Transverse colon (tissue), 4 donors: ENCODE measurements at regions of chr10 and their contacts with region 1.

Region 1: GRCh38 chr10:43671656-43672531 is 23.2 kb upstream of the ZNF32 start:
- DNase-seq: peak; percentile 30
- H3K4me3 ChIP-seq: no peak overlapping the region
- H3K27ac ChIP-seq: no peak overlapping the region
- H3K4me1 ChIP-seq: peaks cover 0 to 6% (median 0%) of the 10 kb centered on the region in 4 donors
- H3K27me3 ChIP-seq: peaks cover 27% of the 10 kb centered on the region
- CTCF ChIP-seq: peak; percentile 73 to 85 (median 78)
- EP300 ChIP-seq: no peak
- POLR2A ChIP-seq: no peak

Region 2: GRCh38 chr10:43739161-43739560 is 67.3 kb after region 1 on chr10:
- in situ Hi-C with region 1: no loop called
- intact Hi-C with region 1: no loop called
- DNase-seq: no peak
- H3K4me3 ChIP-seq: no peak overlapping the region
- H3K27ac ChIP-seq: no peak overlapping the region
- H3K4me1 ChIP-seq: no peaks in the 10 kb centered on the region
- H3K27me3 ChIP-seq: no peaks in the 10 kb centered on the region
- CTCF ChIP-seq: no peak
- EP300 ChIP-seq: no peak
- POLR2A ChIP-seq: no peak

Region 3: GRCh38 chr10:44310762-44311562 is 639.1 kb after region 1 on chr10:
- in situ Hi-C with region 1: loop called in 2 of 4 experiments (anchors 25 kb)
- intact Hi-C with region 1: loop called (anchors 10 kb)
- DNase-seq: peak; percentile 84
- H3K4me3 ChIP-seq: peak overlapping the region in 2 of 4 donors; percentile 24 to 34
- H3K27ac ChIP-seq: peak overlapping the region in 1 of 4 donors; percentile 8
- H3K4me1 ChIP-seq: peaks cover 4 to 10% (median 9%) of the 10 kb centered on the region in 4 donors
- H3K27me3 ChIP-seq: no peaks in the 10 kb centered on the region
- CTCF ChIP-seq: peak; percentile 77 to 90 (median 85)
- EP300 ChIP-seq: no peak
- POLR2A ChIP-seq: no peak